Psoas muscle (tissue), 8 donors: ENCODE measurements at regions of chr11 and their contacts with region 1.

Region 1: DNA sequence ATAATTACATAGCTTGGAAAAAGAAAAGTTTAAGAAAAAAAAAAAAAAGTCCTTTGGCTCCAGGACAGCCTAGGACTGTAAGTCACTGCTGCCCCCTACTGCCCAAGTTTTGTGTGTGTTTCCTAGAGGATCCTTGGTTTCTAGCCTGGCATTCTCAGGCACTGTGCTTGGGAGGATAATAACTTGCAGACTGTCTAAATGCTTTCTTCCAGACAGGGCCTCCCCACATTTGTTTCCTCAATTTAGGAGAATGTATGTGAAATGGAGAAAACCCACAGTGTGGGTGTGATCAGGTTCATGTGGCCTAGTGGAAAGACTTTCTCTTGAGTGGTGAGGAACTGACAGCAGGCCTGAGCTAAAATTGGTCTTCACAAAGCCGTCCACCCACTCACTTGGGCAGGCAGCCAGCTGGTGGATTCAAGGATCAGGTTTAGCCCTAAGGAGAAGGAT is 191.0 kb downstream of the NAV2 start:
- DNase-seq: peak; percentile 50 to 72
- ATAC-seq: peak; percentile 82 to 94 (median 84)
- H3K4me3 ChIP-seq: no peak overlapping the region
- H3K27ac ChIP-seq: no peak overlapping the region
- H3K4me1 ChIP-seq: no peaks in the 10 kb centered on the region
- H3K27me3 ChIP-seq: no peaks in the 10 kb centered on the region
- CTCF ChIP-seq: peak; percentile 87

Region 2: DNA sequence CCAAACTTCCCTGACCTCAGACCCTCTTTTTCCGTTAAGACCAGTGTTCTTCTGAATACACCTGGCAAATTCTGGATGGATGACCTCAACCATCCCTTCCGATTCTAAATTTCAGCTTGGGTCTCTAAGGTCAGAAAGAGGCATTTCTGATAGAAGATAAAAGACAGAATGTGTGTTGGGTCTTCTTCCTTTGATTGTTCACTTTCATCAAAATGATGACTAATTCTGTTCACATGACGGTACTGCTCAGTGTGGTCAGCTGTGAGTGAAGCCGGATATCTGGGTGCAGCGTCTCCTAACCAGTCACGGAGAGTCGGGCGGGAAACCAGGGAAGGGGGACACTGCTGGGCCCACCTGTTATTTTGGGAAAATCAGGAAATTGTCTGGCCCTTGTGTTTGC is 342.6 kb before region 1 on chr11:
- intact Hi-C with region 1: loop called (anchors 2 kb)
- DNase-seq: no peak
- ATAC-seq: no peak
- H3K4me3 ChIP-seq: no peak overlapping the region
- H3K27ac ChIP-seq: no peak overlapping the region
- H3K4me1 ChIP-seq: no peaks in the 10 kb centered on the region
- H3K27me3 ChIP-seq: no peaks in the 10 kb centered on the region
- CTCF ChIP-seq: no peak